Endothelial cell of umbilical vein (primary cell): ENCODE measurements at regions of chr7 and their contacts with region 1.

Region 1: GRCh38 chr7:17298207-17298839 is at the start of gene AHR:
- DNase-seq: peak; percentile 89
- H3K4me3 ChIP-seq: peak within 1 kb of the TSS; percentile 62 to 97 (median 90)
- H3K27ac ChIP-seq: peak within 1 kb of the TSS; percentile 56
- H3K4me1 ChIP-seq: peaks cover 29% of the 10 kb centered on the region
- H3K27me3 ChIP-seq: no peaks in the 10 kb centered on the region
- CTCF ChIP-seq: no peak
- POLR2A ChIP-seq: peak; percentile 65
- total RNA-seq, gene AHR: 29.3 and 31.8 TPM in 2 replicates

Region 2: DNA sequence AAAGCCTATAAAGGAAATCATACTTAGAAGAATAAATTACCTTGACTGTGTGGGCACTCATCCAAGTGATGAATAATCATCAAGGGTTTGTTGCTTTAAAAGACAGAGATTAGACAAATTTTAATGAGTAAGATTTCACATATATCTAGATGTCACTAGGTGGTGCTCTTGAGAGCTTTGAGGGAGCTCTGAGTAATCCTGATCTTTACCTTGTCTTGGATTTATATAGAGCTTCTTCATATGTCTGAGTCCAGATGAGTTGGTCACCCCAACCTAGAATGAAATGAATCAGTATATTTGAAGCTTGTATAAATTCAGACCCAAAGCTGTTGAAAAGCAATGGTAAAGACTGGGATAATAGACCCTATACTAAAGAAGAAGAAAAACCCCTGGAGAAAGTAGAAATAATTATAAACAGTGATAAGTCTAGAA is 497.2 kb before region 1 on chr7:
- CTCF ChIA-PET with region 1: interaction called, 13 read pairs
- POLR2A ChIA-PET with region 1: no interaction called
- dilution Hi-C with region 1: no loop called
- intact Hi-C with region 1: loop called (anchors 5 kb)
- DNase-seq: peak; percentile 57
- H3K4me3 ChIP-seq: no peak overlapping the region
- H3K27ac ChIP-seq: no peak overlapping the region
- H3K4me1 ChIP-seq: no peaks in the 10 kb centered on the region
- H3K27me3 ChIP-seq: peaks cover 2 to 4% of the 10 kb centered on the region in 2 experiments
- CTCF ChIP-seq: peak; percentile 28 to 29
- POLR2A ChIP-seq: no peak

Region 3: GRCh38 chr7:16989811-16990413 is 308.4 kb before region 1 on chr7:
- CTCF ChIA-PET with region 1: interaction called, 291 read pairs
- POLR2A ChIA-PET with region 1: interaction called, 10 read pairs
- dilution Hi-C with region 1: no loop called
- intact Hi-C with region 1: no loop called
- DNase-seq: peak; percentile 93
- H3K4me3 ChIP-seq: peak overlapping the region in 1 of 3 experiments; percentile 55
- H3K27ac ChIP-seq: peak overlapping the region; percentile 4
- H3K4me1 ChIP-seq: peaks cover 13% of the 10 kb centered on the region
- H3K27me3 ChIP-seq: no peaks in the 10 kb centered on the region
- CTCF ChIP-seq: no peak
- POLR2A ChIP-seq: no peak

Region 4: DNA sequence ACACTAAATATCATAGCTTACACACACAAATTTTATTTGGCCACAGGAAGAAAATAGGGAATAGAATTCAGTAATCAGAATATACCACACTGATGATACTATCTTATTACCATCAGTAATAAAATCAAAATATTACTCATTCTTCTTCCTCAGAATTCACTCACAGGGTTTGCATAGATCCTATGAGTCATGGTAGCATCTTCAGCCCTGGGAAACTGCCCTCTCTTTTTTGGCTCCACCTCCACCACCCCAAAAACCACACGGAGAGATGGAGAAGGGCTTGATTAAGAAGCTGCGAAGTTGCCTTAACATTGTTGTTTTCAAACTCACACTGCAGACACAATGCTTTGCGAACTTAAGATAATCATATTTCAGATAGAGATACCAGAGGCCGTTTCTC is 154.0 kb before region 1 on chr7:
- CTCF ChIA-PET with region 1: interaction called, 6 read pairs
- POLR2A ChIA-PET with region 1: no interaction called
- dilution Hi-C with region 1: no loop called
- intact Hi-C with region 1: loop called (anchors 5 kb)
- DNase-seq: peak; percentile 22
- H3K4me3 ChIP-seq: no peak overlapping the region
- H3K27ac ChIP-seq: no peak overlapping the region
- H3K4me1 ChIP-seq: peaks cover 10% of the 10 kb centered on the region
- H3K27me3 ChIP-seq: no peaks in the 10 kb centered on the region
- CTCF ChIP-seq: no peak
- POLR2A ChIP-seq: no peak

Region 5: GRCh38 chr7:17370092-17370491 is 71.8 kb after region 1 on chr7:
- CTCF ChIA-PET with region 1: interaction called, 20 read pairs
- POLR2A ChIA-PET with region 1: no interaction called
- dilution Hi-C with region 1: no loop called
- intact Hi-C with region 1: no loop called
- DNase-seq: no peak
- H3K4me3 ChIP-seq: no peak overlapping the region
- H3K27ac ChIP-seq: no peak overlapping the region
- H3K4me1 ChIP-seq: peaks cover 23% of the 10 kb centered on the region
- H3K27me3 ChIP-seq: no peaks in the 10 kb centered on the region
- CTCF ChIP-seq: no peak
- POLR2A ChIP-seq: no peak

Region 6: DNA sequence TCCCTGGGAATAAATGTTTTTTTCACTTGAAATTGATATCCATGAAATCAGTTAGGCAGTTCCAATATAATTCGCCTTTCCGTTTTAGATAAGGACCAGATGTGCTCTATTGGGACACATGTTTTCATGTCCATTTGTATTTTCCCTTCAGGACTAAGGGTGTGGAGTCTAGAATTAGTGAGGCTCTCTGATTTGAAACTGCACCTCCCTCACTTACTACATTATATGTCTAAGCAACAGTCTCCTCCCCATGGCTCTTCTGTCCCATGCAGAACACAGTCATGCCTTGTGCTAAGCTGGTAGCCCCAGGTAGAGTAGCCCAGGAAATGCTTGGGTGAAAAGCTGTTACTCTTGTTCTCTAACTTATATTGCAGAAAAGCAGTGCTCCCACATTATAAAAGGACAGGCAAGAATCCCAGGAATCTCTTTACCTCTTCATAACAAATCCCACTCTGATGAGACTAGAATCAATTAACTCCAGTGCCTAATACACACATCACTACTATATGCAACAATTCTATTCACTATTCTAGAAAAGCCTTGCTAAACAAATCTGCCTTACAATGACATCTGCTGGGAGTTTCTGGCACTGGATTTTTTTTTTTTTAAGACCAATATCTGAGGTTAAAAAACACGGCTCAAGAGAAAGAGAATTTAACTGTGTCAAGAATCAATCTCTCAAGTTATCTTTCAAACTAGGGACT is 348.1 kb after region 1 on chr7:
- CTCF ChIA-PET with region 1: interaction called, 97 read pairs
- POLR2A ChIA-PET with region 1: no interaction called
- dilution Hi-C with region 1: no loop called
- intact Hi-C with region 1: loop called (anchors 1 kb)
- DNase-seq: peak; percentile 38
- H3K4me3 ChIP-seq: no peak overlapping the region
- H3K27ac ChIP-seq: no peak overlapping the region
- H3K4me1 ChIP-seq: no peaks in the 10 kb centered on the region
- H3K27me3 ChIP-seq: no peaks in the 10 kb centered on the region
- CTCF ChIP-seq: peak in 1 of 2 donors; percentile 17
- POLR2A ChIP-seq: no peak

Region 7: GRCh38 chr7:18345641-18346234 is 1047.4 kb after region 1 on chr7:
- CTCF ChIA-PET with region 1: interaction called, 8 read pairs
- POLR2A ChIA-PET with region 1: no interaction called
- dilution Hi-C with region 1: no loop called
- intact Hi-C with region 1: loop called (anchors 10 kb)
- DNase-seq: peak; percentile 72
- H3K4me3 ChIP-seq: no peak overlapping the region
- H3K27ac ChIP-seq: no peak overlapping the region
- H3K4me1 ChIP-seq: no peaks in the 10 kb centered on the region
- H3K27me3 ChIP-seq: no peaks in the 10 kb centered on the region
- CTCF ChIP-seq: peak; percentile 70 to 74
- POLR2A ChIP-seq: no peak